WTC11 (cell line): ENCODE measurements at regions of chr22 and their contacts with region 1.

Region 1: DNA sequence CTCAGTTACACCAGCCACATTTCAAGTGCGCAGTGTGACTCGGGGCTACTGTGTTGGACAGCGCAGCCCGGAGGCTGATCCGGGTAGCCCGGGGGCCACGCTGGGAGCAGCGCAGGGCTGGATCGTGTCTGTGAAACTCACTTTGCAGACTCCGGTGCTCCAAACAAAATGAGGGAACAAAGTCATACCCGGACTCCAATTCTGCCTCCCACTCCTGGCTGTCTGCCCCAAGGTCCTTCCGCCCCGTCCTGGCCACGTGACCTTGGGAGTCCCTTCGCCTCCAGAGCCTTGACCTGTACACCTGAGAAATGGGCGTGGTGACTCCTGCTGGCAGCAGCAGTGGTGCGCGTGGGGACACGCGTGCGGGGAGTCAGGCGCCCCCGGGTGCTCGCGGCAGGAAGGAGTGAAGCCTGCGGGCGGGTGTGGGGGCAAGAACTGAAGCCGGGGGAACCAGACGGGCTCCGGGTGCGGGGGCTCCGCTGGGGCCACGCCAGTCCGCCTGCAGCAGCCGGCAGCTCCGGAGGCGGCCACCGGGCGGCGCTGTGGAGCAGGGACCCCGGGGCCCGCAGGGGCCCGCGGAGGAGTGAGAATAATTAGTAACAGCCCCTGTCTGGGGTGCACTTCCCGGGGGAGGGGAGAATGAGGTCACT is 42.4 kb downstream of the KCNJ4 start:
- DNase-seq: peak; percentile 76
- ATAC-seq: peak; percentile 63
- H3K4me3 Mint-ChIP-seq: no peak overlapping the region; the same call in 1 of the 2 replicates
- H3K27ac Mint-ChIP-seq: no peak overlapping the region
- H3K4me1 Mint-ChIP-seq: peaks cover 17% of the 10 kb centered on the region
- H3K27me3 Mint-ChIP-seq: peaks cover 4% of the 10 kb centered on the region
- CTCF ChIP-seq: peak; percentile 98

Region 2: GRCh38 chr22:38398609-38399461 is 13.7 kb before region 1 on chr22:
- CTCF ChIA-PET with region 1: interaction called, 52 read pairs
- POLR2A ChIA-PET with region 1: no interaction called
- DNase-seq: peak; percentile 92
- ATAC-seq: peak; percentile 55
- H3K4me3 Mint-ChIP-seq: peak overlapping the region; percentile 77
- H3K27ac Mint-ChIP-seq: peak overlapping the region; percentile 95
- H3K4me1 Mint-ChIP-seq: peaks cover 60% of the 10 kb centered on the region
- H3K27me3 Mint-ChIP-seq: no peaks in the 10 kb centered on the region
- CTCF ChIP-seq: no peak

Region 3: DNA sequence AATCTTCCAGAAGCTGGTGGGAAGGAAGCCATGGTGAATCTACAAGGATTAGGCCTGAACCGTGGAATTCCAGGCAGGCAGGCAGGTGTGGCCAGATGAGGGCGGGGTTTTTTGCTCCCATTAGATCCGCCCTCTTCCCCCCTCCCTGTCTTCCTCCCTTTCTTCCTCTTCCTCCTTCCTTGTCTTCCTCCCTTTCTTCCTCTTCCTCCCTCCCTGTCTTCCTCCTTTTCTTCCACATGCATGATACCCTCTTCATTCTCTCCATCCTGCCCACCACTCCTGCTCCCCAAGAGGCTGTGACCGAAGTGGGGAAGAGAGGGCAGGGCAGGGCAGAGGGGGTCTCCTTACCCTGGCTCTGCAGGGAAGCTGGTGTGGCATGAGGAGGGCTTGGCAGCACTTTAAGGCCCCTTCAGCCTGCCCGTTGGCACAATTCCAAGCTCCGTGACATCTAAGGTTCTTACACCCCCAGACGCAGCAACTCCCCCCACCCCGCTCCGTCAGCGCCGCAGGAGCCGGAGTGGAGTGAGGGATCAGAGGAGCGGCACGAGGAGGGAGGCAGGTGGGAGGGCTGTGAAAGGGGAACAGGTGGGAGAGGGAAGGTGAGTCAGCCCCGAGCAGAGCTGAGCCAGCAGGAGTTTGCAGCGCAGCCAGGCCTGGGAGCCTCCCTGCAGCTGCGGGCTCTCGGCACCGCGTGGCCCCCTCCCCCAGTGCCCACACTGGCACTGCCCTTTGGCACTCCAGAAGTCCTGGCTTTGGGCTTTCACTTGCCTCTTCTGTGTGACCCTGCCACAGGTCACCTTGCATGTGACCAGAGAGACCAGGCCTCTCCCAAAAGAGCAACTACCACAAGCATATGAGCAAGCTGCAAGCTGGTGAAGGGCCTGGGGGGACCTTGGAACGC is 10.3 kb after region 1 on chr22:
- CTCF ChIA-PET with region 1: interaction called, 22 read pairs
- POLR2A ChIA-PET with region 1: no interaction called
- DNase-seq: no peak
- ATAC-seq: peak; percentile 63
- H3K4me3 Mint-ChIP-seq: no peak overlapping the region
- H3K27ac Mint-ChIP-seq: peak overlapping the region; percentile 19; the same call in 1 of the 2 replicates
- H3K4me1 Mint-ChIP-seq: peaks cover 24% of the 10 kb centered on the region
- H3K27me3 Mint-ChIP-seq: no peaks in the 10 kb centered on the region
- CTCF ChIP-seq: no peak

Region 4: DNA sequence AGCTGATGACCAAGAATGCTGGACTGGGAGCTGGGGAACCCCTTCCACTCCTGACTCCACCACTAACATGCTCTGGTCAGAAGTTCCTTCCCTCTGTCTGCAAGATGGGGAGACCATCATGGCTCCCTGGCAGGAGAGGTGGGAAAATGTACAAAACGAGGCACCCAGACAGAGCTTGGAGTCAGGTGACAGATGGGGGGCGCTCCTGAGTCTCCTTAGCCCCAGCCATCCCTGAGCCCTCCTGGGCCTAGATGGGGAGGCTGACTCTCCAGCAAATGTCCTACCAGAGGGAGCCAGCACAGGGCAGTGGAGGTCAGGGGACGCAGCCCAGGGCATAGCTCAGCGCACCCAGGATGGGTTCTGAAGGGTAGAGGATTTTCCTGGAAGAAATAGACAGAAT is 22.4 kb after region 1 on chr22:
- CTCF ChIA-PET with region 1: interaction called, 10 read pairs
- POLR2A ChIA-PET with region 1: no interaction called
- DNase-seq: peak; percentile 75
- ATAC-seq: peak; percentile 91
- H3K4me3 Mint-ChIP-seq: no peak overlapping the region
- H3K27ac Mint-ChIP-seq: no peak overlapping the region
- H3K4me1 Mint-ChIP-seq: 0 out of 2 replicates have a peak, but pooled peaks cover 4% of the 10 kb centered on the region
- H3K27me3 Mint-ChIP-seq: peaks cover 2% of the 10 kb centered on the region; the same call in 1 of the 2 replicates
- CTCF ChIP-seq: 0 out of 2 replicates have a peak, but pooled peaks have one; percentile 35

Region 5: DNA sequence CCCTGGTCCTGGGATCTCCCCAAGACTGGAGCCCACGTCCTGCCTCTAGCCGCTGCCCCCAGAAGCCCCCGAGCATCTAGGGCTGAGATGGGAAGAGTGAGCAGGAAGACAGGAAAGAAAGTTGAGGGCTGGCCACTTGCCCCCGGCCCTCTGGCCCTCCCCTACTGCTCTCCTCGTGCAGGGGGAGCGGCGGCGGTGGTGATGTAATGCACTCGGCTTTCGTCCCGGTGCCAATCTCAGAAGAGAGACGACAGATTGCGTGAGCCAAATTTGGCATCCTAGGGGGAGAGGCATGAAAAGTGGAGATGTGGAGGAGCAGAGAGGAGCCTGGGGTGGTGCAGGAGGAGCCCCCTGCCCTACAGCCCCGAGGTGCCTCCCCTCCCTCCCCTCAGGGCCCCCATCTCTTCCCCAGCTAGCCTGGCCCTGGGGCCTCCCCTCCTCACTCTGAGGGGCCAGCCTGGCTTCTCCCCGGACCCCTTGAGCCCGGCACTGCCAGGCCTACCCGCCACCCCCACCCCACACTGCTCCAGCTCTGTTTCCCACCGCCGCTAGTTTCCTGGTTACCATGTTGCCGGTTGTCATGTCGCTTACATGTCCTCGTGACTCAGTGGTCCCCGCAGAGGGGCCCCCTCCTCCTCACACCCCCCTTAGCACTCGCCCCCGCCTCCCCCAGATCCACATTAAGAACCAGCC is 40.0 kb after region 1 on chr22:
- CTCF ChIA-PET with region 1: interaction called, 12 read pairs
- POLR2A ChIA-PET with region 1: no interaction called
- DNase-seq: no peak
- ATAC-seq: no peak
- H3K4me3 Mint-ChIP-seq: no peak overlapping the region
- H3K27ac Mint-ChIP-seq: no peak overlapping the region
- H3K4me1 Mint-ChIP-seq: peaks cover 29% of the 10 kb centered on the region
- H3K27me3 Mint-ChIP-seq: peaks cover 56% of the 10 kb centered on the region
- CTCF ChIP-seq: no peak

Region 6: GRCh38 chr22:38461414-38462081 is 49.0 kb after region 1 on chr22:
- CTCF ChIA-PET with region 1: interaction called, 15 read pairs
- POLR2A ChIA-PET with region 1: no interaction called
- DNase-seq: peak; percentile 94
- ATAC-seq: peak; percentile 84
- H3K4me3 Mint-ChIP-seq: peak overlapping the region; percentile 49
- H3K27ac Mint-ChIP-seq: peak overlapping the region; percentile 27; the same call in 1 of the 2 replicates
- H3K4me1 Mint-ChIP-seq: peaks cover 28% of the 10 kb centered on the region
- H3K27me3 Mint-ChIP-seq: peaks cover 90% of the 10 kb centered on the region
- CTCF ChIP-seq: no peak